ENCODE measurements at regions of chr14 and their contacts with region 1.

Region 1: DNA sequence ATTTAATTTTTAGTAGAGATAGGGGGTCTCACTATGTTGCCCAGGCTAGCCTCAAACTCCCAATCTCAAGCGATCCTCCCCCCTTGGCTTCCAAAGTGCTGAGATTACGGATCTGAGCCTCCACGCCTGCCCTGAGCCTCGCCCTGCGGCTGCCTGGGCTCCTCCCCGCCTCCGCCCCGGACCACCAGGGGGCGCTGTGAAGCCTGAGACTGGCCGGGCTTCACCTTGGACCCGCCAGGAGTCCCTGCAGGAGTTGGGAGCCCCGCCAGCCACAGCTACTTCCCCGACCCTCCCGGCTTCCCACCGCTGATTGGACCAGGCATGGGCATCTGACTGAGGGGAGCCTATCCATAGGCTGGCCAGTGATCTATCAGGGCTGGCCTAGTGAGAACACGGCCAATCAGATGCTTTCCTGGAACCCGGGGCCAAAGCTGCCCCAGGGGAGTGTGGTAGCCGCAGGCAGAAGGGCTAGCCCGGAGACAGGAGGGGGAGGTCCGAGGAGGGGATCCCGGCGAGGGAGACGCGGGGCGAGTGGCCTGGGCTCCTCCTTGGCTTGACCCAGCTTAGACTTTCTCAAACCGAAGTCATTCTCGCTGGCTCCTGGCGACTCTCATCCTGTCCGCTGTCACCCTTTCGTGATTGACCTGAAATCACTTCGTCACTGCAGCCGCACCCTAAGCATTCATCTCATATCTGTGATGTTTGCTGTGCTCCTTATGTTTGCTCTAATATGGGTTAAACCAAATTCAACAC is 15.1 kb upstream of the ANKRD9 start:
- DNase-seq: peak; percentile 99
- ATAC-seq: peak; percentile 99
- H3K4me3 Mint-ChIP-seq: peak overlapping the region; percentile 80
- H3K27ac Mint-ChIP-seq: peak overlapping the region; percentile 87
- H3K4me1 Mint-ChIP-seq: peaks cover 20% of the 10 kb centered on the region
- H3K27me3 Mint-ChIP-seq: no peaks in the 10 kb centered on the region; the same call in none of the 2 replicates
- CTCF ChIP-seq: peak; percentile 90

Region 2: GRCh38 chr14:102461490-102462338 is 62.9 kb before region 1 on chr14:
- CTCF ChIA-PET with region 1: no interaction called
- POLR2A ChIA-PET with region 1: no interaction called
- DNase-seq: no peak
- ATAC-seq: no peak
- H3K4me3 Mint-ChIP-seq: no peak overlapping the region
- H3K27ac Mint-ChIP-seq: peak overlapping the region; percentile 68; the same call in 1 of the 2 replicates
- H3K4me1 Mint-ChIP-seq: no peaks in the 10 kb centered on the region
- H3K27me3 Mint-ChIP-seq: no peaks in the 10 kb centered on the region
- CTCF ChIP-seq: no peak

Region 3: GRCh38 chr14:102509744-102510615 is 14.7 kb before region 1 on chr14 and contains the start of gene ANKRD9:
- CTCF ChIA-PET with region 1: interaction called, 11 read pairs
- POLR2A ChIA-PET with region 1: interaction called, 4 read pairs
- DNase-seq: peak; percentile 96
- ATAC-seq: peak; percentile 65
- H3K4me3 Mint-ChIP-seq: peak within 1 kb of the TSS; percentile 88
- H3K27ac Mint-ChIP-seq: peak within 1 kb of the TSS; percentile 89
- H3K4me1 Mint-ChIP-seq: peaks cover 15% of the 10 kb centered on the region
- H3K27me3 Mint-ChIP-seq: peaks cover 2% of the 10 kb centered on the region; the same call in 1 of the 2 replicates
- CTCF ChIP-seq: no peak
- total RNA-seq, gene ANKRD9: 55.6 to 63.8 TPM (median 56.6 TPM) in 3 replicates

Region 4: DNA sequence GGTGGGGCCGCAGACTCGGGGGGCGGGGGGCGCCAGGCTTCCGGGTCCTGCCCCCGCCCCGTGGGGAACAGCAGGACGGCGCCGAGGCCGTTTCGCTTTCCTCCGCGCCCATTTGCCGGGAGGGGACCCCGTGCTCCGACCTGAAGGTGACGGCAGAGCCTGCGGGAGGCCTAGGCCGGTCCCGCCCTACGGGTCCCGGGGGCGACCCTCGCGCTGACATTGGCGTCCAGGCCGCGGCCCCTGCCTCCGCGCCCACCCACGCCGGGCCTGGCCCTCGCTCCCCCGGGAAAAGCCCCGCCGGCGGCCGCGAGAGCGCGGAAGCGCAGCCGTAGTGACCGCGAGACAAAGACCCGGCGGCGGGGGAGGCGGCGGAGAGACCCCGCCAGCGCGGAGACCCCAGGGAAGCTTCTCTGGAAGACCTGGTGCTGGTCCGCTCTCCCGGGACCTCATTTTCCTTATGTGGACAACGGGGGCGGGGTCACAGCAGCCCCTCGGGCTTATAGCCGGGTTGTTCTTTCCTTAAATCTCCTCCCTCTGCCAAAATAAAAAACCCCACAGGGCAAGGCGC is 30.7 kb after region 1 on chr14:
- CTCF ChIA-PET with region 1: interaction called, 11 read pairs
- POLR2A ChIA-PET with region 1: no interaction called
- DNase-seq: peak; percentile 75
- ATAC-seq: peak; percentile 76
- H3K4me3 Mint-ChIP-seq: peak overlapping the region; percentile 57
- H3K27ac Mint-ChIP-seq: no peak overlapping the region
- H3K4me1 Mint-ChIP-seq: 0 out of 2 replicates have a peak, but pooled peaks cover 2% of the 10 kb centered on the region
- H3K27me3 Mint-ChIP-seq: no peaks in the 10 kb centered on the region
- CTCF ChIP-seq: no peak

Region 5: DNA sequence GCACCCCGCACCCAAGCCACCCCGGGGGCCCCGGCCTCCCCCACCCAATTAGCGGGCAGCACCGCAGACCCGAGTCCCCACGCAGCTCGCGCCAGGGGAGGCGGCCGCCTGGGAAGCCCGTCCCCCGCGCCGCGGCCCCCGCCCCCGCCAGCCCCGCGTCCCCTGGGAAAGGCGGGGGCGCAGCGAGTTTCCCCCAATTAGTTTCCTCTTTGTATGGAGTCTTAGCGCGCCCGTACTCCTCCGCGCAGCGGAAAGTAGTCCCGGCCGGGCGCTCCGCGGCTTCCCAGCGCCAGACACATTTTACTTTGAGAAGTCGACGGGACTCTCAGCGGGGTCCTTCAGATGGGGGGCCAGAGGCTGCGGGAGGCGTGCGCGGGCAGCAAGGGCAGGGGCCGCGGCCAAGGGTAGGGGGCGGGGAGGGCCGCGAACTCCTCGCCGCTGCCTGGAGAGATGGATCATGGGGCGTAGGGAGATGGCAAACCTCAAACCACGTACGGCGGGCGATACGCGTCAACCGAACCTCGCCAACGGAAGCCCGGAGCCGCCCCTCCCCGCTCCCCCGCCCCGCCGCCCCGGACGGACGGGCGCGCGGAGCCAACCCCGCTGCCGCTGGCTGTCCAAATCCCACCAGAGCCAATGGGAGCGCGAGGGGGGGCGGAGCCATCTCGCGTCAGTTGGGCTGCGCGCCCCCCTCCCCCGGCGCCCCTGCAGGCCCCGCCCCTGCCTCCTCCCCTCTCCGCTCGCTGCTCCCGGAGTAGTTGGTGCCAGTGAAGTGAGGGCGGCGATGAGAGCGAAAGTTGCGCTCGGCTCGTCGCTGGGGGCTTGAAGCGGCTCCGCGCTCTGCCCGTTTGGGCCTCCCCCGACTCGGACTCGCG is 67.5 kb after region 1 on chr14 and contains the start of gene RCOR1:
- CTCF ChIA-PET with region 1: interaction called, 23 read pairs
- POLR2A ChIA-PET with region 1: interaction called, 6 read pairs
- DNase-seq: peak; percentile 98
- ATAC-seq: peak; percentile 87
- H3K4me3 Mint-ChIP-seq: peak within 1 kb of the TSS; percentile 81
- H3K27ac Mint-ChIP-seq: peak within 1 kb of the TSS; percentile 95
- H3K4me1 Mint-ChIP-seq: peaks cover 41% of the 10 kb centered on the region
- H3K27me3 Mint-ChIP-seq: peaks cover 5% of the 10 kb centered on the region; the same call in 1 of the 2 replicates
- CTCF ChIP-seq: no peak
- total RNA-seq, gene RCOR1: 25.1 to 25.4 TPM (median 25.4 TPM) in 3 replicates

Measured in WTC11 (cell line).